ENCODE measurements at regions of chr11 and their contacts with region 1.

Region 1: DNA sequence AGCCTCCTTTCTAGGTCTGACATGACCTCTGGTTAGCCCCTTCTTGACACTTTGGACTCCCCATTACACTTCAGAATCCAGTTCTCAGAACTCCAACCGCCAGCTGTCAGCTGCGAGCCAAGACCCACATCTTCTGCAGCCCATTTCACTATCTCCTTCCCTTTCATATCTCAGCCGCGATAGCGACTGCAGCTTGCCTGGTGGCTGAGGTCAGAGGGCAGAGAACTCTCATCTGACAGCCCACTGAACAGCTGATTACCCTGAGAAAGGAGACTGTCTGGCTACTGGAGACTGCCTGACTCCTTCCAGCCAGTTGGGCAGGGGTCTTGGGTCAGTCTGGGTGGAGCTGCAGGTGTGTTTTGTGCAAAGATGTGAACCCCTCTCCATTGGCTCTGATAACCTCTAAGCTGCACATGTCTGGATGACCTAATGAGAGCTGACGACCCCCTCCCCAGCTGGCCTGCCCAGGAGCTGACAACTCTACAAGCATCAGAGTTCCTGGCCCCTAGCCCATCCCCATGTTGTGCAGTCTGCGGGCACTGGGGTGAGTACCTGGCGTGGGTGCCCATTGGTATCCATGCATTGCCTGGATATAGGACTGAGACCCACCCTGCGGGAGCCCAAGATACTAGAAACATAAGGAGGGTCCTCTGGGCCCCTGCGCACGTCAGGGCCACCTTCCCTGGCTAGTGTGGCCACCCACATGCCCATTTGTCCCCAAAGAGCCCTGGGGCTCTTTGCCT is 1.1 kb downstream of the CHRM1 start:
- DNase-seq: no peak
- H3K4me3 ChIP-seq: no peak overlapping the region
- H3K27ac ChIP-seq: no peak overlapping the region
- H3K4me1 ChIP-seq: no peaks in the 10 kb centered on the region
- H3K27me3 ChIP-seq: no peaks in the 10 kb centered on the region
- CTCF ChIP-seq: no peak
- EP300 ChIP-seq: no peak
- POLR2A ChIP-seq: no peak

Region 2: DNA sequence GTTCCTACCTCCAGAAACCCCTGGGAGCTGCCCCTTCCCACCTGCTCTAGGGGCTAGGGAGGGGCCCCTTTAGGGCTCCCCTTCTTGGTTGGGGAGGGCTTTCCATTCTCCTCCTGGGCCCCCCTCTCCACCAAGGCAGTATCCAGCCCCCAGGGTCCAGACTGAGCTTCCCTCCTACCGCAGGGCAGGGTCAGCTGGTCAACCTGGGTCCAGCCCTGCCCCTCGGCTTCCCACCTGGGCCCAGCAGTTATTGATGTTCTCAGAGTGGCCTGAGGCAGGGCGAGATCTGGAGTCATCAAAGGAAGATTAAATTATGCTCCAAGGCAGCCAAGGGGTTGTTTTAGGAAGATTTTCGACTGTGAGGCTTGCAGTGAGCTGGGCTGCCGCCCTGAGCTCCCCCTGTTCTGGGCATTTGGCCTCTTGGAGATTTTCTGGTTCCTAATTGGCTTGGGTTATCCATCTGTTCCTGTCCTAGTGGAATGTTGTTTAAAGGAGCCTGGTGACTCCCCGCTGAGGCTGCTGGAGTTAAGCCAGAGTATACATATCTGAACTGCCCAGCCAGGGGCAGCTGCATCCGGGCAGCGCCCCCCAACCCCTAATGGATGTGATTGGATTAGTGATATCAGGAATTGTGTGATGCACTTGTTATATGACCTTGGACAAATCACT is 97.4 kb after region 1 on chr11:
- intact Hi-C with region 1: loop called in 1 of 4 experiments (anchors 5 kb)
- DNase-seq: no peak
- H3K4me3 ChIP-seq: no peak overlapping the region
- H3K27ac ChIP-seq: no peak overlapping the region
- H3K4me1 ChIP-seq: peaks cover 1% of the 10 kb centered on the region
- H3K27me3 ChIP-seq: no peaks in the 10 kb centered on the region
- CTCF ChIP-seq: no peak
- EP300 ChIP-seq: no peak
- POLR2A ChIP-seq: no peak